Esophagus squamous epithelium (tissue), 5 donors: ENCODE measurements at regions of chr22 and their contacts with region 1.

Region 1: DNA sequence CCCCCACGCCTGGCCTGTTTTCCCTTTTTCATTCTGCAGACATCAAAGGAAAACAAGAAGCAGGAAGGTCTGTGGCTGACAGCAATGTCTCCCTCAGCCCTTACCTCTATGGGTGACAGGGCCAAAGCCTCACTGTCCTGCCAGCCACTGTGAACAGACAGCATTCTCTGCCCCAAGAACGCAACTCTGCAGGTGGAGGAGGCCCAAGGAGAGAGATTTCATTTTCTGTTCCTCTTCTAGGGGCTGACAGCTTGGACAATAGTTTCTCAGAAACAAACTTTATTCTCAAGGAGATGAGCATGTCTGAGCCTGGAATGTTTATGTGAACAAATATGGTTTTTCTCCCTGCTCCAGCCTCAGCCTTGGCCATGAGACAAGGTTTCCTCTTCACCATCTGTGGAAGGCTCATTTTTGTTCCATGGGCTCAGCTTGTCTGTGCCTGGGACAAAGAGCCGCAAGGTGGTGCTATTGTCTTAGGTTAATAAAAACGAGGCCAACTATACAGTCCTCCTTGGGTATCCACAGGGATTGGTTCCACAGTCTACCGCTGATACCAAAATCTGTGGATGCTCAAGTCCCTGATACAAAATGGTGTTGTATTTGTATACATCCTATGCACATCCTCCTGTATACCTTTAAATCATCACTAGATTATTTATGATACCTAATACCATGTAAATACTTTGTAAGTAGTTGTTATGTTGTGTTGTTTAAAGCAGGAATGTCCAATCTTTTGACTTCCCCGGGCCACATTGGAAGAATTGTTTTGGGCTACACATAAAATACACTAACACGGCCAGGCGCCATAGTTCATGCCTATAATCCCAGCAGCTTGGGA is 5.8 kb downstream of the PIWIL3 start:
- DNase-seq: no peak
- H3K4me3 ChIP-seq: no peak overlapping the region
- H3K27ac ChIP-seq: no peak overlapping the region
- H3K4me1 ChIP-seq: no peaks in the 10 kb centered on the region
- H3K27me3 ChIP-seq: peaks cover 0 to 29% (median 0%) of the 10 kb centered on the region in 4 donors
- CTCF ChIP-seq: peak in 5 of 6 experiments; percentile 59 to 70 (median 68)
- POLR2A ChIP-seq: no peak

Region 2: GRCh38 chr22:24845041-24845898 is 76.5 kb after region 1 on chr22:
- intact Hi-C with region 1: loop called (anchors 5 kb)
- DNase-seq: no peak
- H3K4me3 ChIP-seq: no peak overlapping the region
- H3K27ac ChIP-seq: no peak overlapping the region
- H3K4me1 ChIP-seq: no peaks in the 10 kb centered on the region
- H3K27me3 ChIP-seq: no peaks in the 10 kb centered on the region
- CTCF ChIP-seq: no peak
- POLR2A ChIP-seq: no peak

Region 3: GRCh38 chr22:24948356-24949202 is 179.8 kb after region 1 on chr22:
- intact Hi-C with region 1: no loop called
- DNase-seq: no peak
- H3K4me3 ChIP-seq: no peak overlapping the region
- H3K27ac ChIP-seq: no peak overlapping the region
- H3K4me1 ChIP-seq: peaks cover 0 to 62% (median 3%) of the 10 kb centered on the region in 3 donors
- H3K27me3 ChIP-seq: peaks cover 0 to 38% (median 0%) of the 10 kb centered on the region in 4 donors
- CTCF ChIP-seq: no peak
- POLR2A ChIP-seq: no peak